ENCODE measurements at regions of chr5 and their contacts with region 1.

Region 1: DNA sequence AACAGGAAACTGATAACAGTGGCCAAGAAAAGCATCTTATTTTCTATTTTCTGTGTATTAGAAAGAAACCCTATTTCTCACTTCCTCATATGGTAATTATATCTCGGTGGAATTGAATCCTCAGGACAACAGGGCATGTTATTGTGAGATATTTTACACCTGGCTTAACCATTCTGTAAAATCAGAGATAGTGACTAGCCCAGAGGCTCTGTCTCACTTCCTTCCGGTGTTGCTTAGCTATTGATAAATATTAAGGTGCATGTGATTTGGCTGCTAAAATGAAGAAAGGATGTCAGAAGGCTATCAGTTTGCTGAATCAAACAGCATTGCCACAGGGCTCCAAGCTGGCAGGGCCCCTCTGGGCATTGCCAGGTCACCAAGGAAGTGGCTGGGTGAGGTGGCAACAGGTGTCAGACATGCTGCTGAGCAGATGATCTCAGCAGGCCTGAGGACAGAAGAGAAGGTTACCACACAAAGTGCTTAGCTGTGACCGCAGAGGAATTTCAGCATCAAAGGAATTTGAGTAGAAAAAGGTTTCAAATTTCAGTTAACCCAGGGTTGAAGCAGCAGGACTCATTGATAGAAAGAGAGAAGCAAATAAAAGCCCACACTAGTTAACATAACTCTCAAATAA is 330.7 kb downstream of the PDE4D start:
- DNase-seq: peak; percentile 92 to 96
- ATAC-seq: peak; percentile 84 to 86
- H3K4me3 ChIP-seq: no peak overlapping the region
- H3K27ac ChIP-seq: peak overlapping the region; percentile 87 to 93 (median 90)
- H3K4me1 ChIP-seq: peaks cover 67 to 94% of the 10 kb centered on the region in 2 donors
- H3K27me3 ChIP-seq: no peaks in the 10 kb centered on the region
- CTCF ChIP-seq: no peak
- POLR2A ChIP-seq: no peak

Region 2: GRCh38 chr5:59358005-59358861 is 204.6 kb before region 1 on chr5:
- in situ Hi-C with region 1: no loop called
- intact Hi-C with region 1: loop called (anchors 2 kb)
- DNase-seq: peak; percentile 64 to 66
- ATAC-seq: peak; percentile 67 to 68
- H3K4me3 ChIP-seq: peak overlapping the region; percentile 12 to 57 (median 53)
- H3K27ac ChIP-seq: peak overlapping the region; percentile 81 to 86 (median 83)
- H3K4me1 ChIP-seq: peaks cover 31 to 75% of the 10 kb centered on the region in 2 donors
- H3K27me3 ChIP-seq: no peaks in the 10 kb centered on the region
- CTCF ChIP-seq: no peak
- POLR2A ChIP-seq: peak; percentile 40 to 65

Region 3: GRCh38 chr5:59416451-59416850 is 146.4 kb before region 1 on chr5:
- in situ Hi-C with region 1: no loop called
- intact Hi-C with region 1: no loop called
- DNase-seq: no peak
- ATAC-seq: no peak
- H3K4me3 ChIP-seq: no peak overlapping the region
- H3K27ac ChIP-seq: peak overlapping the region in 1 of 4 donors; percentile 56
- H3K4me1 ChIP-seq: peaks cover 18 to 35% of the 10 kb centered on the region in 2 donors
- H3K27me3 ChIP-seq: no peaks in the 10 kb centered on the region
- CTCF ChIP-seq: no peak
- POLR2A ChIP-seq: no peak

Region 4: DNA sequence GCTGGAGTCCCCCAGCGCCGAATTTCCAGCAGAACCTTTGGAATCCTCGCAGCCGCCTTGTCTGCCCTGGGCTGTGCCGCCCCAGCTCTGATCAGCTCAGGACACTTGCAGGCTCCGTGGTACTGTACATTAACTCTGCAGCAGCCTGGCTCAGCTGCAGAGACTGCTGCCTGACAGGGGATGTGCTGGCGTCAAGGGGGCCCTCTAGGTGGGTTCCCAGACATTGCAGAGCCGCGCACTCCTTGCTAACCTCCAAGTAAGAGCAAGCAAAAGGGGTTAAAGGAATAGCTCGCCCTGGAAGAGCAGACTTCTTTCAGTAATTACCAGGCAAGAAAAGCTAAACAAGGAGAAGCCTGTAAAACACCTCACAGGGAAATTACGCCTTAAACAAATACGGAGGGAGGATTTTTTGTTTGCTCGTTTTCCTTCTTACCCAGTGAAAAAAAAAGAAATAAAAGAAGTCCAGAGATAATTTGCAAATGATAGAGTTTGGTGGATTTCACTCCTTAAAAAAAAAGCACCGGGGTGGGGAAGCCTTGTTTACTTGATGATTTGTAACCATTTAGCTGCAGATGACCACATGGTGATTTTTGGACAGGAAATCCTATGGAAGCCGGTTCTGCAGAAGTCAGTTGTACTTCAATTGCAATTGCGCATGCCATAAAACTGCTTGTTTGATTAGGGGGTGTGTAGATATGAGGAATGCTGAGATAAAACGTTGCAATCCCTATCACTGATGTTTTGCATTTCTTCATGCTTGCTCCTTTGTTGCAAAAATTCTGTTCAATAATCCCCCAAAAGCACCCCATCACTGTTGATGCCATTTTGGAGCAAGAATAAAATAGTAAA is 24.8 kb after region 1 on chr5:
- in situ Hi-C with region 1: no loop called
- intact Hi-C with region 1: loop called (anchors 2 kb)
- DNase-seq: peak; percentile 71 to 88
- ATAC-seq: peak; percentile 53 to 68
- H3K4me3 ChIP-seq: peak overlapping the region; percentile 63 to 74 (median 67)
- H3K27ac ChIP-seq: peak overlapping the region; percentile 78 to 92 (median 88)
- H3K4me1 ChIP-seq: peaks cover 8 to 28% of the 10 kb centered on the region in 2 donors
- H3K27me3 ChIP-seq: no peaks in the 10 kb centered on the region
- CTCF ChIP-seq: peak in 2 of 5 experiments; percentile 8 to 42
- POLR2A ChIP-seq: peak; percentile 60 to 84

Region 5: GRCh38 chr5:59615272-59615671 is 52.4 kb after region 1 on chr5:
- in situ Hi-C with region 1: no loop called
- intact Hi-C with region 1: loop called (anchors 1 kb)
- DNase-seq: no peak
- ATAC-seq: no peak
- H3K4me3 ChIP-seq: no peak overlapping the region
- H3K27ac ChIP-seq: peak overlapping the region; percentile 86 to 93 (median 90)
- H3K4me1 ChIP-seq: peaks cover 16 to 54% of the 10 kb centered on the region in 2 donors
- H3K27me3 ChIP-seq: no peaks in the 10 kb centered on the region
- CTCF ChIP-seq: no peak
- POLR2A ChIP-seq: no peak

Region 6: GRCh38 chr5:60026161-60026560 is 463.3 kb after region 1 on chr5:
- in situ Hi-C with region 1: no loop called
- intact Hi-C with region 1: no loop called
- DNase-seq: no peak
- ATAC-seq: no peak
- H3K4me3 ChIP-seq: no peak overlapping the region
- H3K27ac ChIP-seq: no peak overlapping the region
- H3K4me1 ChIP-seq: no peaks in the 10 kb centered on the region
- H3K27me3 ChIP-seq: no peaks in the 10 kb centered on the region
- CTCF ChIP-seq: no peak
- POLR2A ChIP-seq: no peak

Measured in gastrocnemius medialis (tissue), 4 donors.